ENCODE measurements at regions of chr5 and their contacts with region 1.

Region 1: GRCh38 chr5:95927927-95928723 is 33.5 kb downstream of the ELL2 start:
- DNase-seq: no peak
- ATAC-seq: peak; percentile 70
- H3K4me3 Mint-ChIP-seq: peak overlapping the region; percentile 37
- H3K27ac Mint-ChIP-seq: peak overlapping the region; percentile 84
- H3K4me1 Mint-ChIP-seq: peaks cover 67% of the 10 kb centered on the region
- H3K27me3 Mint-ChIP-seq: no peaks in the 10 kb centered on the region
- CTCF ChIP-seq: no peak

Region 2: DNA sequence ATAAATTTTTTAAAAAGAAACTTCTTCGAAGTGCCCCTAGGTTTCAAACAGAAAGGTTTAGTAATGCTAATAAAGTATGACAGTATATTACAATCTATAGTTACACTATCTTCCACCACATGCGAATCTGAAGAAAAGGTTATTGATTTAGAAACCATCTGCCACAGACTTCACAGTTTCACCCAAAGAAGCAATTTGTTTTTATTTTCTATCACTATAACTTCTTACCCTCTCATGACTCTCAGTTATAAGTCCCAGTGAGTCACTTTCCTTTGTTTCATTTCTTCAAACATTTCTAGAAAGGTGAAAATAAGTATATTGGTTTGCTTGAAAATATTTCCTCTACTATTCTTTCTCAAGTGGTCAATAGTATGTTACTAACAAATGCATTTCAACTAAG is 736.8 kb before region 1 on chr5:
- CTCF ChIA-PET with region 1: no interaction called
- POLR2A ChIA-PET with region 1: no interaction called
- intact Hi-C with region 1: no loop called
- DNase-seq: no peak
- ATAC-seq: no peak
- H3K4me3 Mint-ChIP-seq: no peak overlapping the region
- H3K27ac Mint-ChIP-seq: no peak overlapping the region
- H3K4me1 Mint-ChIP-seq: no peaks in the 10 kb centered on the region
- H3K27me3 Mint-ChIP-seq: no peaks in the 10 kb centered on the region
- CTCF ChIP-seq: no peak

Region 3: GRCh38 chr5:95830226-95830625 is 97.9 kb before region 1 on chr5:
- CTCF ChIA-PET with region 1: no interaction called
- POLR2A ChIA-PET with region 1: no interaction called
- intact Hi-C with region 1: no loop called
- DNase-seq: no peak
- ATAC-seq: no peak
- H3K4me3 Mint-ChIP-seq: no peak overlapping the region
- H3K27ac Mint-ChIP-seq: no peak overlapping the region
- H3K4me1 Mint-ChIP-seq: peaks cover 30% of the 10 kb centered on the region
- H3K27me3 Mint-ChIP-seq: no peaks in the 10 kb centered on the region
- CTCF ChIP-seq: no peak

Region 4: GRCh38 chr5:95870105-95870672 is 57.9 kb before region 1 on chr5:
- CTCF ChIA-PET with region 1: no interaction called
- POLR2A ChIA-PET with region 1: interaction called, 10 read pairs
- intact Hi-C with region 1: no loop called
- DNase-seq: no peak
- ATAC-seq: peak; percentile 33
- H3K4me3 Mint-ChIP-seq: peak overlapping the region; percentile 42
- H3K27ac Mint-ChIP-seq: peak overlapping the region; percentile 76
- H3K4me1 Mint-ChIP-seq: peaks cover 35% of the 10 kb centered on the region
- H3K27me3 Mint-ChIP-seq: no peaks in the 10 kb centered on the region
- CTCF ChIP-seq: no peak

Region 5: DNA sequence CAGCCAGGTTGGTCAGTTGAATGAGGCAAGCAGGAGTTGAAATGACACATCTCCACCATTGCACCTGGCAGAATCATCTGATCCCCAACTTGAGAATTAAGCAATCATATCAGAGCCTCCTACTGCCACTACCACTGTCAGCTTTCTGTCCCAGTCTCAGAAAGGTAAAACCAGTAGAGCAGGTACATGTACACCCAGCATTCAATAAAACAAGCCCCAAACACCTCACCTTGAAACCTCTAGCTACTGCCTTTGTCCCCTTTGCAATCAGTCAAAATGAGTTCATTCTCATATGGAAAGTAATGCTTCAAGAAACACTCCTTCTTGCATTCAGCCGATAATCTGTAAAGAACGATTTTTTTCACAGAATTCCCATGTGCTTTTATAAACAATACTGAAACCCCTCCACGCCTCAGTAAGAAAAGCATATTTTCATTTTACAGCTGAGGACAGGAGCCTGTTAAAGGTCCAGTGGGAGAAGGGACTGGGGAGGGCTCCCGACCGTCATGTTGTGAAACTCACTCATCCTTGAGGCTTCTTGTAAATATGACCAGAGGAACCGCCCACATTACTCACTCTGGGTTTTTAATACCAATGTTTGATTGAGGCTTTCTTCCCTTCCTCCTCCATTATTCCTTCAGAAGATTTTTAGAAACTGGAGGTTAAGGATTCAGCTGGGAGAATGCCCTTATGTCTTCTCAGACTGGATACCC is 44.4 kb before region 1 on chr5:
- CTCF ChIA-PET with region 1: no interaction called
- POLR2A ChIA-PET with region 1: no interaction called
- intact Hi-C with region 1: loop called (anchors 5 kb)
- DNase-seq: no peak
- ATAC-seq: peak; percentile 74
- H3K4me3 Mint-ChIP-seq: peak overlapping the region; percentile 61
- H3K27ac Mint-ChIP-seq: peak overlapping the region; percentile 63
- H3K4me1 Mint-ChIP-seq: peaks cover 18% of the 10 kb centered on the region
- H3K27me3 Mint-ChIP-seq: no peaks in the 10 kb centered on the region
- CTCF ChIP-seq: no peak

Region 6: DNA sequence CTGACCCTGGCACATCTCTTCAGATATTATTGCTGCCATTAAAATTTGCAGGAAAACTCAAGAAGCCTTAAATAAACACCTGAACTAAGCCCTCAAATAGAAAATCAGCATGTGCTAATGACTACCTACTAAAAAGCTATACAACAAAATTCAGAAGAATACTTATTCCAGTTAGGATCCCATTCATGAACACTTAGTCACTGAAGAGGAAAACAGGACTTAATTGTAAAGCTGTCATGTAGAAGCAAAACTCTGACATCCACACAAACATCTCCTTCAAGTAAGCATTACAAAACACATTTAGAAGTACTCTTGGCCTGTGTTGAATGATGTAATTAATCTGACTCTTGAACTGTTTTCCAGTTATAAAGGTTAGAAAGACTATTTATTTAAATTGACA is 13.6 kb after region 1 on chr5:
- CTCF ChIA-PET with region 1: no interaction called
- POLR2A ChIA-PET with region 1: interaction called, 3 read pairs
- intact Hi-C with region 1: loop called (anchors 1 kb)
- DNase-seq: no peak
- ATAC-seq: no peak
- H3K4me3 Mint-ChIP-seq: no peak overlapping the region
- H3K27ac Mint-ChIP-seq: no peak overlapping the region
- H3K4me1 Mint-ChIP-seq: peaks cover 8% of the 10 kb centered on the region
- H3K27me3 Mint-ChIP-seq: no peaks in the 10 kb centered on the region
- CTCF ChIP-seq: no peak